ENCODE measurements at regions of chr15 and their contacts with region 1.

Region 1: DNA sequence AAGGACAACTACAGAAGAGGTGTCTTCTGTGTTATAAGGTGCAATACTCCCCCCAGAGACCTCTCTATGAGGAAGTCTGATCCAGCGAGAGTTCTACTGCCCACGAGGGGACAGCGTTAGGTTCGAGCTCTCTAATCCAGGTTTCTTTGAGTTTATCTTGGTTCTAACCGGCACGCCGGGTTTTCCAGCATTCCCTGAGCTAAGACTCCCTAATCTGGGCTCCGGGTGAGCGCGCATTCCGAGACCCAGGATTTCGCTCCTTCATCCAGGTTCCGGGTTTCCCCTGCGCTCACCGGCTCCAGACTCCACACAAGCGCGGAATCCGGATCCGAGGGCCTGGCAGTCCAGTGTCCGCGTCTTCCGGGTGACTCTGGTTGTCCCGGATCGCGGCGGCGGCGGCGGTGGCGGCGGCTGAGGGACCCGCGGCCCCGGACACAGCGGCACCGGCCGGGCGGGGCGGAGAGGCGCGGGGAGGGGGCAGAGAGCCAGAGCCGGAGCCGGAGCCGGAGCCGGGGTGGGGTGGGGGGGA is at the start of gene ZNF609:
- DNase-seq: peak; percentile 81 to 91 (median 85)
- ATAC-seq: peak; percentile 79
- H3K4me3 ChIP-seq: peak within 1 kb of the TSS; percentile 62 to 70
- H3K4me3 Mint-ChIP-seq: peak within 1 kb of the TSS; percentile 92
- H3K27ac ChIP-seq: peak within 1 kb of the TSS; percentile 32 to 69
- H3K27ac Mint-ChIP-seq: peak within 1 kb of the TSS; percentile 89
- H3K4me1 ChIP-seq: peaks cover 84% of the 10 kb centered on the region
- H3K4me1 Mint-ChIP-seq: peaks cover 84% of the 10 kb centered on the region
- H3K27me3 ChIP-seq: no peaks in the 10 kb centered on the region
- H3K27me3 Mint-ChIP-seq: no peaks in the 10 kb centered on the region
- CTCF ChIP-seq: no peak
- total RNA-seq, gene ZNF609: 40.1 to 40.7 TPM

Region 2: DNA sequence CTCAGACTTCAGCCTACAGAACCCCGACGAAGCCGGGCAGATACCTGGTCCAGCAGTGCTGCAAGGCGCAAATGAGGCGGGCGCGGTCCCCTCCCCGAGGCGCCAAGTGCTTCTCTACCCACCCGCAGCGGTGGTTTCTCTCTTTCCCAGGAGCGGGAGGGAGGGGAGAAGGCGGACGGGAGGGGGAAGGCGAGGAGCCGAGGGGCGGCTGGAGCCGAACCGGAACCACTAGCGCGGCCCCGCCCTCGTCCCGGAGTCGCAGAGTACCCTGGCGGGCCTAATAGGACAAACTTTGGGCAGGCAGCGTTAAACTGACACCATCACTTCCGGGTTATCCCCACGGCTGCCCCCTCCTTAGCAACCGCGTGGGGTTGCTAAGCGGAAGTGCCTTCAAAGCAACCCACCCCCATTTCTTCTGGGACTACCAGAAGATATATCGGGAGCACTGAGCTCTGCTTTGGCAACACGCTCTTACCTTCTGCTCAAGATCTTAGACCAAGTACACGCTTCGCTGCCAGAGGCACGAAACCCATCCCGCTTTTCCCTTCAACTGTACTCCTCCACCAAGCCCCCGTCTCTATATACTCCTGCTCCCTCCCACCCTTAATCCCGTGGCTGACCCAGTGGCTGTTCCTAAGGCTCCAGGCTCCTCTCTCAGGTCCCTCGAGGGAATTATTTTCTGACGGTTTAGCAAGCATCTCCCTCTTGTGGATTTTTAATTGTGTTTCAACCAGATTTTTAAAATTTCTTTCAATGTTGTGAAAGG is 104.1 kb before region 1 on chr15 and contains the start of gene CSNK1G1:
- CTCF ChIA-PET with region 1: no interaction called
- POLR2A ChIA-PET with region 1: no interaction called
- intact Hi-C with region 1: loop called in 1 of 2 experiments (anchors 10 kb)
- DNase-seq: peak; percentile 77 to 97 (median 92)
- ATAC-seq: peak; percentile 96
- H3K4me3 ChIP-seq: peak within 1 kb of the TSS; percentile 86 to 91
- H3K4me3 Mint-ChIP-seq: peak within 1 kb of the TSS; percentile 94
- H3K27ac ChIP-seq: peak within 1 kb of the TSS; percentile 67 to 74
- H3K27ac Mint-ChIP-seq: peak within 1 kb of the TSS; percentile 89
- H3K4me1 ChIP-seq: peaks cover 9% of the 10 kb centered on the region
- H3K4me1 Mint-ChIP-seq: peaks cover 18% of the 10 kb centered on the region
- H3K27me3 ChIP-seq: no peaks in the 10 kb centered on the region
- H3K27me3 Mint-ChIP-seq: no peaks in the 10 kb centered on the region
- CTCF ChIP-seq: peak; percentile 43
- total RNA-seq, gene CSNK1G1: 10.0 to 12.9 TPM

Region 3: GRCh38 chr15:64430000-64430735 is 30.1 kb before region 1 on chr15:
- CTCF ChIA-PET with region 1: interaction called, 5 read pairs
- POLR2A ChIA-PET with region 1: interaction called, 7 read pairs
- intact Hi-C with region 1: loop called (anchors 2 kb)
- DNase-seq: peak; percentile 1 to 88 (median 43)
- ATAC-seq: peak; percentile 89
- H3K4me3 ChIP-seq: no peak overlapping the region
- H3K4me3 Mint-ChIP-seq: peak overlapping the region; percentile 57
- H3K27ac ChIP-seq: peak overlapping the region; percentile 49 to 65
- H3K27ac Mint-ChIP-seq: peak overlapping the region; percentile 92
- H3K4me1 ChIP-seq: peaks cover 52% of the 10 kb centered on the region
- H3K4me1 Mint-ChIP-seq: peaks cover 44% of the 10 kb centered on the region
- H3K27me3 ChIP-seq: no peaks in the 10 kb centered on the region
- H3K27me3 Mint-ChIP-seq: no peaks in the 10 kb centered on the region
- CTCF ChIP-seq: no peak

Region 4: GRCh38 chr15:64507293-64507802 is 47.1 kb after region 1 on chr15:
- CTCF ChIA-PET with region 1: interaction called, 5 read pairs
- POLR2A ChIA-PET with region 1: interaction called, 4 read pairs
- intact Hi-C with region 1: loop called in 1 of 2 experiments (anchors 5 kb)
- DNase-seq: peak in 6 of 9 experiments; percentile 23 to 58 (median 34)
- ATAC-seq: peak; percentile 68
- H3K4me3 ChIP-seq: no peak overlapping the region
- H3K4me3 Mint-ChIP-seq: peak overlapping the region; percentile 16
- H3K27ac ChIP-seq: no peak overlapping the region
- H3K27ac Mint-ChIP-seq: peak overlapping the region; percentile 64
- H3K4me1 ChIP-seq: peaks cover 85% of the 10 kb centered on the region
- H3K4me1 Mint-ChIP-seq: peaks cover 78% of the 10 kb centered on the region
- H3K27me3 ChIP-seq: no peaks in the 10 kb centered on the region
- H3K27me3 Mint-ChIP-seq: no peaks in the 10 kb centered on the region
- CTCF ChIP-seq: no peak

Region 5: GRCh38 chr15:64792282-64792681 is 332.0 kb after region 1 on chr15:
- CTCF ChIA-PET with region 1: no interaction called
- POLR2A ChIA-PET with region 1: no interaction called
- intact Hi-C with region 1: no loop called
- DNase-seq: no peak
- ATAC-seq: no peak
- H3K4me3 ChIP-seq: no peak overlapping the region
- H3K4me3 Mint-ChIP-seq: no peak overlapping the region
- H3K27ac ChIP-seq: no peak overlapping the region
- H3K27ac Mint-ChIP-seq: no peak overlapping the region
- H3K4me1 ChIP-seq: no peaks in the 10 kb centered on the region
- H3K4me1 Mint-ChIP-seq: no peaks in the 10 kb centered on the region
- H3K27me3 ChIP-seq: no peaks in the 10 kb centered on the region
- H3K27me3 Mint-ChIP-seq: no peaks in the 10 kb centered on the region
- CTCF ChIP-seq: no peak

Region 6: DNA sequence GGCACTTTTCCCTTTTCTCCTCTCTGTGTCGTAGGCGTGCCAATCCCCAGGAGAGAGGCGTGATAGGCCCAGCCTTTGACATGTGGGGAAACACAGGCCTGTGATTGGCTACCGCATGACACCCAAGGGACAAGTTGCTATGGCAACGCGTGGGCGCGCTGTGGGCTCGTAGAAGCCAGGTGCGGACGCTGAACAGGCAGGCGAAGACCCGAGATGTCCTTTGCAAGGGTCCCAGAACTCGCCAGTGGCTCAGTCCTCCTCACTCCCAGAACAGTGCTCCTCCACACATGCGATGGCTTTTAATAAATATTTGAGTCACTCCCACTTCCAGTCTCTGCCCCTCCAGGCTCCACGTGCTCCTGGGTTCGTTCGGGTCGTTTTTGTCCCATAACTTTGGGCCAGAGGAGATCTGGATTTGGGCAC is 589.2 kb after region 1 on chr15:
- CTCF ChIA-PET with region 1: no interaction called
- POLR2A ChIA-PET with region 1: no interaction called
- intact Hi-C with region 1: no loop called
- DNase-seq: peak; percentile 63 to 95 (median 81)
- ATAC-seq: peak; percentile 98
- H3K4me3 ChIP-seq: peak overlapping the region; percentile 25 to 44
- H3K4me3 Mint-ChIP-seq: peak overlapping the region; percentile 64
- H3K27ac ChIP-seq: no peak overlapping the region
- H3K27ac Mint-ChIP-seq: no peak overlapping the region
- H3K4me1 ChIP-seq: peaks cover 13% of the 10 kb centered on the region
- H3K4me1 Mint-ChIP-seq: peaks cover 14% of the 10 kb centered on the region
- H3K27me3 ChIP-seq: no peaks in the 10 kb centered on the region
- H3K27me3 Mint-ChIP-seq: peaks cover 4% of the 10 kb centered on the region
- CTCF ChIP-seq: no peak

Region 7: GRCh38 chr15:65133548-65134200 is 673.4 kb after region 1 on chr15 and contains the start of gene PDCD7:
- CTCF ChIA-PET with region 1: no interaction called
- POLR2A ChIA-PET with region 1: no interaction called
- intact Hi-C with region 1: loop called in 1 of 2 experiments (anchors 5 kb)
- DNase-seq: peak; percentile 60 to 95 (median 86)
- ATAC-seq: peak; percentile 93
- H3K4me3 ChIP-seq: peak within 1 kb of the TSS; percentile 62 to 78
- H3K4me3 Mint-ChIP-seq: peak within 1 kb of the TSS; percentile 91
- H3K27ac ChIP-seq: peak within 1 kb of the TSS; percentile 80 to 83
- H3K27ac Mint-ChIP-seq: peak within 1 kb of the TSS; percentile 96
- H3K4me1 ChIP-seq: peaks cover 26% of the 10 kb centered on the region
- H3K4me1 Mint-ChIP-seq: peaks cover 31% of the 10 kb centered on the region
- H3K27me3 ChIP-seq: no peaks in the 10 kb centered on the region
- H3K27me3 Mint-ChIP-seq: no peaks in the 10 kb centered on the region
- CTCF ChIP-seq: no peak
- total RNA-seq, gene PDCD7: 20.7 to 21.7 TPM